GM18951 (cell line): ENCODE measurements at regions of chr2 and their contacts with region 1.

Region 1: GRCh38 chr2:210224941-210225672 is at the start of gene ACADL:
- POLR2A ChIP-seq: no peak

Region 2: DNA sequence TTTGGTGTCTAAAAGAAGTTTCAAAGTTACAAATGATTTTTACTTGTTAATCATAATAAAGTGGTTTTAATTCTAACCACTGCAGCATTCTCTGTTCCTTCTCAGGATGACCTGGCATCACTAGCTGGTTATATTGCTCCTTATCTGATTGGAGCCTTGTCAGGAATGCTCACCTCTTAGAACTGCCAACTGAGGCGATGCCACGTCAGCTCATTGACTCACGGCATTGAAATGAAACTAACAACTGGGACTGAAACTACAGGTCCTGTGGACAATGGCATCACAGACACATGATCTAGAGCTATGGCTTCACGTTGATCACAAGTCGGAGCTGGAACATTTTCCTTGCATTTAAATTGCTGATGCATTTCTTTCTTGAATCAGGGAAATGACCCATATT is 856.2 kb before region 1 on chr2:
- in situ Hi-C with region 1: loop called (anchors 25 kb)
- POLR2A ChIP-seq: no peak